ENCODE measurements at regions of chr1 and their contacts with region 1.

Region 1: DNA sequence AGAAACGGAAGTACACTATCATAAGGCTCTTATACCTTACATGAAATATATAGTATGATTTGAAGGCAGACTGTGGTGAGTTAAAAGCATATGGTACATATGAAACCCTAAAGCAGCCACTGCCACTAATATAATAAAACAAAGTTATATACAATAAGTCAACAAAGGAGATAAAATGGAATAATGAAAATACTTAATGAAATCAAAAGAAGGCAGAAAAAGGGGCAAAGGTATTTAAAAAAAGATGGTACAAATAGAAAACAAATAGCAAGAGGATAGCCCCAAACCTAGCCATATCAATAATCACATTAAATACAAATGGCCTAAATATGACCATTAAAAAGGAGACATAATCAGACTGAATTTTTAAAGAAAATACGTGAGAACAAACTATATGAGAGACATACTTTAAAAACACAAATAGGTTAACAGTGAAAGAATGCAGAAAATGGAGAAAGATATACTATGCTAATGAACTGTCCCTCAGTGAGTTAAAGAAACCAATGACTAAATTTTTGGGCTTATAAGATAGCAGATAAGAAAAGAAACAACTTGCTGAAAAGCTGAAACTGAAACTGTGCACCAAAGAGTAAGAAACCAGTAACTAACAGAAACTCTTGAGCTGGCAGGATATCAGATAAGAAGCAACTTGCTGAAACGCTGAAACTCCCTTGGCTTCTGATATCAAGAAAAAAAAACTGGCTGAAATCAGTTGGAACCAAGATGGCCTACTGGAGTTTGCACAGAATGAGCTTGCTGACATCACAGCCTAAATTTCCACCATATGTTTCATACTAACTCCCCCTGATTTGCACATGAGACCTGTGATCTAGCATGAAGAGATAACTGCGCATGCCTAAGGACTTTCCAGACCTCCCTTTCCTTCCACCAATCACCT is 44.3 kb upstream of the IL10 start:
- DNase-seq: peak; percentile 85
- H3K4me3 Mint-ChIP-seq: peak overlapping the region; percentile 46
- H3K27ac Mint-ChIP-seq: peak overlapping the region; percentile 83
- H3K4me1 Mint-ChIP-seq: peaks cover 27% of the 10 kb centered on the region
- H3K27me3 Mint-ChIP-seq: no peaks in the 10 kb centered on the region

Region 2: DNA sequence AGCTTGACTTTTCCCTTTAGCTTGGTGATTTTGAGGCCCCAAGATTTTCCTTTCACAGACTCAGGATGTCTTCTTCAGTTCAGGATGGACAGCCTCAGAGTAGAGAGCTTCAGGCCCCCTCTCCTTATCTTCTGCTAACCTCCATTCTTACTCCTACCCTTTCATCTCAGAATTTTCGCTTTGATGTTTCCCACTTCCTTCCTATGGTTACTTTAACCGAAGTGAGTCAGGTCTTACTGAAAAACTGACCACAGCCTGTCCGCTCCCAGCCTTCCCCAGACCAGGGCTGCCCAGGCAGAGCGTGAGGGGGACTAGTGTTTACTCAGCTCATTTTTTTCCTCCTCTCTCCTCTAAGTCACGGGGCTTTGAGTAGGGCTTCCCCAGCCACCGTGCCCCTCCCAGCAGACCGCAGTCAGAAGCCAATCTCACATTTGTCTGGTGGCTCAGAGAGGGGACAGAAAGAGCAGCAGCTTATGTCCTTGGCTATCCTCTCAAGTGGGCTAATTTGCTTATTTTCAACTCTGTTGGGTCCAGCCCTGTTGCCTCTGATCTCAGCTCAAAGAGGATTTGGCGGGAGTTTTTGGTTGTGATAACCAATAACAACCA is 50.3 kb before region 1 on chr1:
- intact Hi-C with region 1: loop called (anchors 2 kb)
- DNase-seq: peak; percentile 91
- H3K4me3 Mint-ChIP-seq: peak overlapping the region; percentile 74
- H3K27ac Mint-ChIP-seq: peak overlapping the region; percentile 80
- H3K4me1 Mint-ChIP-seq: peaks cover 56% of the 10 kb centered on the region
- H3K27me3 Mint-ChIP-seq: peaks cover 27% of the 10 kb centered on the region

Region 3: GRCh38 chr1:206803221-206803730 is 13.4 kb before region 1 on chr1:
- intact Hi-C with region 1: loop called (anchors 1 kb)
- DNase-seq: peak; percentile 94
- H3K4me3 Mint-ChIP-seq: peak overlapping the region; percentile 55
- H3K27ac Mint-ChIP-seq: peak overlapping the region; percentile 87
- H3K4me1 Mint-ChIP-seq: peaks cover 77% of the 10 kb centered on the region
- H3K27me3 Mint-ChIP-seq: peaks cover 29% of the 10 kb centered on the region

Region 4: DNA sequence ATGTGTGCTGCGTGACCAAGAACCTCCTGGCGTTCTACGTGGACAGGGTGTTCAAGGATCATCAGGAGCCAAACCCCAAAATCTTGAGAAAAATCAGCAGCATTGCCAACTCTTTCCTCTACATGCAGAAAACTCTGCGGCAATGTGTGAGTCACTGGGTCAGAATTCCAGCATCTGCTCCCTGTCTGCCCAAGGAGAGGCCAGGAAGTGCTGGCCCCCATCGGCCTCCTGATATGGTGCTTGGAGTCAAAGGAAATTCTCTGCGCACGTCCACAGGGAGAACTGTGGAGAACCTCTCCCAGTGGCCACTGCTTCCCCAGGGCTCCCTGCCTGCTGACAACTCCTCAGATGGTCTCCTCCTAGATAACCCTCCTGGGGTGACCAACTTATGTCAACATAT is 23.2 kb after region 1 on chr1:
- intact Hi-C with region 1: no loop called
- DNase-seq: no peak
- H3K4me3 Mint-ChIP-seq: no peak overlapping the region
- H3K27ac Mint-ChIP-seq: no peak overlapping the region
- H3K4me1 Mint-ChIP-seq: peaks cover 8% of the 10 kb centered on the region
- H3K27me3 Mint-ChIP-seq: peaks cover 36% of the 10 kb centered on the region

Region 5: GRCh38 chr1:206865013-206865671 is 48.5 kb after region 1 on chr1 and contains the start of gene IL20:
- intact Hi-C with region 1: loop called (anchors 2 kb)
- DNase-seq: peak; percentile 95
- H3K4me3 Mint-ChIP-seq: no peak within 1 kb of the TSS
- H3K27ac Mint-ChIP-seq: peak within 1 kb of the TSS; percentile 32
- H3K4me1 Mint-ChIP-seq: peaks cover 9% of the 10 kb centered on the region
- H3K27me3 Mint-ChIP-seq: peaks cover 30% of the 10 kb centered on the region
- total RNA-seq, gene IL20: not detected in 2 replicates

Region 6: GRCh38 chr1:207282058-207282457 is 465.4 kb after region 1 on chr1:
- intact Hi-C with region 1: no loop called
- DNase-seq: no peak
- H3K4me3 Mint-ChIP-seq: peak overlapping the region; percentile 55
- H3K27ac Mint-ChIP-seq: peak overlapping the region; percentile 84
- H3K4me1 Mint-ChIP-seq: peaks cover 48% of the 10 kb centered on the region
- H3K27me3 Mint-ChIP-seq: peaks cover 1% of the 10 kb centered on the region